Mammary epithelial cell (primary cell): ENCODE measurements at regions of chr11 and their contacts with region 1.

Region 1: GRCh38 chr11:134196756-134197155 is 27.0 kb downstream of the NCAPD3 start:
- DNase-seq: no peak
- H3K4me3 ChIP-seq: no peak overlapping the region
- H3K27ac ChIP-seq: no peak overlapping the region
- H3K4me1 ChIP-seq: no peaks in the 10 kb centered on the region
- H3K27me3 ChIP-seq: no peaks in the 10 kb centered on the region
- CTCF ChIP-seq: no peak

Region 2: DNA sequence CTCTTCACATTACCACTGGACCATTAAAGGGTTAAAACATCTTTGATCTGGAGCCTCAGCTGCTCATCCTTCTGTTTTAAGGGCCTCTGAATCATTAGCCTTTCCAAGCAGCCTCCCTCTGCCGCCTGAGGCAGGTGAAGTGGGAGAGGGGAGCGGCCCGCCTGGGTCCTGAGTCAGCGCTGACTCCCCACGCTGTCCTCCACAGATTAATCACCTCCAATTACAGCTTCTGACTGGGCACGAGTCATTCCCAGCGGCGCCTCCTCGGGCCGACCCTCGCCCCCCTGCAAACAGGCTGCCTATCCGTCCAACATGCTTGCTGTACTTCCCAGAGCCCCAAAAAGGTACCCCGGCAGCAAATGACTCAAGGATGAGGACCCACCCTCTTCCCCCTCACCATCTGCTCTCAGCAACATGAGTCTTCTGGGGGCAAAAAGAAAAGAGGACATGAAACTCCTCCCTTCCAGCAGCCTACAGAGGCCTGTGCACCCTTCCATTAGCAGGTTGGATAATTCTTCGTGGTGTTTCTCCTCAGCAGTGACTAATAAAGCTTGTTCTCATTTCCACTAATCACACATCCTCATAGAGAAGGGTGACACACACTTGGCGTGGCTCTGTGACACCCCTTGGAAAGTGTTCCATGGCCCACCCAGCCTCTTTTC is 172.2 kb before region 1 on chr11:
- CTCF ChIA-PET with region 1: interaction called, 10 read pairs
- dilution Hi-C with region 1: no loop called
- in situ Hi-C with region 1: no loop called
- intact Hi-C with region 1: no loop called
- DNase-seq: peak; percentile 87
- H3K4me3 ChIP-seq: no peak overlapping the region
- H3K27ac ChIP-seq: peak overlapping the region; percentile 73
- H3K4me1 ChIP-seq: peaks cover 35% of the 10 kb centered on the region
- H3K27me3 ChIP-seq: no peaks in the 10 kb centered on the region
- CTCF ChIP-seq: no peak